Activated CD8-positive, alpha-beta T cell treated with anti-CD3 and anti-CD28 coated beads, Interleukin-2, amount 10 ng/mL, durations not matched to agents 7 days and 5 days (primary cell): ENCODE measurements at regions of chr4 and their contacts with region 1.

Region 1: GRCh38 chr4:152500800-152501434 is 35.0 kb downstream of the FBXW7 start:
- DNase-seq: peak; percentile 84
- ATAC-seq: peak; percentile 85
- H3K4me3 Mint-ChIP-seq: no peak overlapping the region
- H3K27ac Mint-ChIP-seq: no peak overlapping the region
- H3K4me1 Mint-ChIP-seq: peaks cover 14% of the 10 kb centered on the region
- H3K27me3 Mint-ChIP-seq: no peaks in the 10 kb centered on the region

Region 2: DNA sequence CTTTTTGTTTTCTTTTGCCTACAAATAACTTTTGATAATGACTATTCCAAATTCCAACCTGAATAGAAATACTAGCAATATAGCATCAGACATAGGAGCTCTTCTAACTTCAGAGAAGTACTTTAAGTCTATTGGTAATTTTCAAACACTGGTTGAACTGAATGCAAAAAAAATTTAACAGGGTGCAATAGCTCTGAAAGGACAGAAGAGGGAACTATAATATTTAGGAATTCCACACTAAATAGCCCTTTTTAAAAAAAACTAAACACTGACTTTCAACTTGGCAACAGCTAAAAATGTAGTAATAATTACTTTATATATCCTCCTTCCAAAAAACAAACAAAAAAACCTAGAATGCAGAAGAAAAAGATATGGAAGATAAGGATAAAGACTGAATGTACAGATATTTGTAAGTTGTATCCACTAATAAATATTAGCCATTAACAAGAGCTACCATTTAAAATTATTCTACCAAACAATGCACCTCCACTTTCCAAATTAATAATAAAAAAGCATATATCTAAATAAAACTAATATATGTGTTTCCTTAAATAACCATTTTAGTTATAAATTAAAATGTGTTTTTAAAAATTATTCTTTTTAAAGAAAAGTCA is 46.4 kb before region 1 on chr4:
- CTCF ChIA-PET with region 1: interaction called, 29 read pairs
- POLR2A ChIA-PET with region 1: no interaction called
- DNase-seq: no peak
- ATAC-seq: no peak
- H3K4me3 Mint-ChIP-seq: no peak overlapping the region
- H3K27ac Mint-ChIP-seq: no peak overlapping the region
- H3K4me1 Mint-ChIP-seq: peaks cover 29% of the 10 kb centered on the region
- H3K27me3 Mint-ChIP-seq: no peaks in the 10 kb centered on the region

Region 3: GRCh38 chr4:152525873-152526272 is 25.0 kb after region 1 on chr4:
- CTCF ChIA-PET with region 1: interaction called, 36 read pairs
- POLR2A ChIA-PET with region 1: no interaction called
- DNase-seq: no peak
- ATAC-seq: no peak
- H3K4me3 Mint-ChIP-seq: no peak overlapping the region
- H3K27ac Mint-ChIP-seq: no peak overlapping the region
- H3K4me1 Mint-ChIP-seq: peaks cover 54% of the 10 kb centered on the region
- H3K27me3 Mint-ChIP-seq: no peaks in the 10 kb centered on the region

Region 4: DNA sequence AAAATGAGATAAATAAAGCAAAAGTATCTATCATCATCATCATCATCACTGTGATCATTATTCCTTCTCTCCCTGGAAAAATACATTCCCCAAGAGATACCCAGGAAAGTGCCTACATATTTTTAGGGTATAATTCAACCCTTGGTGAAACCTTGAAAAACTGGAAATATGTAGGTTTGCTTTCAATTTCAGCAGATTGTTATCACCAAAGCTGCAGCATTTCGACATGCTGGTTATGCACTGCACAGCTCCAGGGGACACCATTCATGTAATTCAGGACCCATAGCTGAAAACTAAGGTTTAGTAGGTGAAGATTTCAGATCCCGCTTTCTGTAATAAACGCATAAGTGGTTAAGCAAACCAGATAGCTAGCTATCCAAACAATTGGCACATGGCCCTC is 63.4 kb after region 1 on chr4:
- CTCF ChIA-PET with region 1: interaction called, 12 read pairs
- POLR2A ChIA-PET with region 1: no interaction called
- DNase-seq: no peak
- ATAC-seq: no peak
- H3K4me3 Mint-ChIP-seq: no peak overlapping the region
- H3K27ac Mint-ChIP-seq: no peak overlapping the region
- H3K4me1 Mint-ChIP-seq: peaks cover 5% of the 10 kb centered on the region
- H3K27me3 Mint-ChIP-seq: peaks cover 5% of the 10 kb centered on the region

Region 5: GRCh38 chr4:152679414-152680281 is 178.7 kb after region 1 on chr4 and contains the start of gene TMEM154:
- CTCF ChIA-PET with region 1: interaction called, 46 read pairs
- POLR2A ChIA-PET with region 1: no interaction called
- DNase-seq: peak; percentile 84
- ATAC-seq: peak; percentile 99
- H3K4me3 Mint-ChIP-seq: peak within 1 kb of the TSS; percentile 90
- H3K27ac Mint-ChIP-seq: peak within 1 kb of the TSS; percentile 94
- H3K4me1 Mint-ChIP-seq: peaks cover 44% of the 10 kb centered on the region
- H3K27me3 Mint-ChIP-seq: no peaks in the 10 kb centered on the region
- total RNA-seq, gene TMEM154: 20.0 to 22.2 TPM

Region 6: DNA sequence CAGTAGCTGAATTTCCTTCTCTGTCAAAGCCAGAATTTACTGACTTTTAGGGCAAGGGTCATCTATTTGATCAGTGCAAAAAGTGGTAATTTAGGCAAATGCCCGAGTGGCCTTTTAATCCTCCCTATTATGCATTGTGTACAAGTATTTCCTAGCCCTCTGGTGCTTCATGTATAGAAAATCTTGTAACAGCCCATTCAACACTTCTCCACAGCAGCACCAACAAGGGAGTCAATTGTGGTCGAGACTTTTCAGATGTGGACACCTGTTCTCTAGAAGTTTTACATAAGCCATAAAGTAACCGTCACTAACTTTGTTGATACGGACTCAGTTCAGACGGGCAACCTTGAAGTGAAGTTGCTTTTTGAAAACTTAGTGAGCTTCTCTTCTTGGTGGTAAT is 384.3 kb after region 1 on chr4:
- CTCF ChIA-PET with region 1: no interaction called
- POLR2A ChIA-PET with region 1: no interaction called
- DNase-seq: no peak
- ATAC-seq: no peak
- H3K4me3 Mint-ChIP-seq: no peak overlapping the region
- H3K27ac Mint-ChIP-seq: no peak overlapping the region
- H3K4me1 Mint-ChIP-seq: no peaks in the 10 kb centered on the region
- H3K27me3 Mint-ChIP-seq: no peaks in the 10 kb centered on the region